ENCODE measurements at regions of chr10 and their contacts with region 1.

Region 1: DNA sequence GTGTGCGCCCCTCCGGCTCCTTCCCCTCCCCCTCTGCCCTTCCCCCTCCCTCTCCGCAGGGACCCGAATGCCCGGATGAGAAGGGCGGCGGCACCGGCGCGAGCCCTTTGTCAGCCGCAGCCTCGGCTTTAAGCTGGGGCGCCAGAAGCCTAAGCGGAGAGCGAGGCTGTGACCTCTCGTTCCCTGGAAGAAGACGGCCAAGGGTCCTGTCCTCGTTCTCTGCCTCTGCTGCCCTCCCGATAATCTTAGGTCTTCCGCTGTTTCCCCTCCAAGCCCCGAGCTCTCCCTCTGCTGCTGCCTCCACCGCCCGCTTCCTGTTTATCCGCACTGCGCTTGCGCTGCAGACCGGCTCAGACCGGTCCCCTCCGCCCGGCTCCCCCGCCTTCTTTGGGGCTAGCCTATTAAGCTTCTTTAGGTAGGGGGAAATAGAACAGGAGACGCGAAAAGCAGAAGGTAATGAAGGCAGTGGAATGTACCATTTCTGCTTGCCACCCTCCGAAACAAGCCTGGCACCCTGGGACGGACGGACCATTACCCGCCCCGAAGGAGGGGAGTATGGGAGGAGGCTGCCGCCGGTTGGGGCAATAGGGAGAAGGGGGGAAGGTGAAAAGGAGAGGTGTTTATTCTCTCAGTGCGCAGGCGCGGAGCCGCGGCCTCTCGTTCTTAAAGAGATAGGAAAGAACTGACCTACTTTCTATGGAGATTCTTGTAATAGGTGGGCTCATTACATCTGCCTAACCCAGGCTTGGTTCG is at the start of gene OGA:
- DNase-seq: peak; percentile 92 to 100 (median 98)
- ATAC-seq: peak; percentile 87
- H3K4me3 ChIP-seq: peak within 1 kb of the TSS; percentile 97
- H3K4me3 Mint-ChIP-seq: peak within 1 kb of the TSS; percentile 99
- H3K27ac ChIP-seq: peak within 1 kb of the TSS; percentile 82 to 87
- H3K27ac Mint-ChIP-seq: peak within 1 kb of the TSS; percentile 96
- H3K4me1 ChIP-seq: peaks cover 29% of the 10 kb centered on the region
- H3K4me1 Mint-ChIP-seq: peaks cover 48% of the 10 kb centered on the region
- H3K27me3 ChIP-seq: no peaks in the 10 kb centered on the region
- H3K27me3 Mint-ChIP-seq: no peaks in the 10 kb centered on the region
- CTCF ChIP-seq: no peak
- total RNA-seq, gene OGA: 395 to 416 TPM

Region 2: GRCh38 chr10:101429423-101429822 is 388.9 kb before region 1 on chr10:
- CTCF ChIA-PET with region 1: no interaction called
- POLR2A ChIA-PET with region 1: no interaction called
- intact Hi-C with region 1: no loop called
- DNase-seq: no peak
- ATAC-seq: no peak
- H3K4me3 ChIP-seq: no peak overlapping the region
- H3K4me3 Mint-ChIP-seq: no peak overlapping the region
- H3K27ac ChIP-seq: no peak overlapping the region
- H3K27ac Mint-ChIP-seq: no peak overlapping the region
- H3K4me1 ChIP-seq: no peaks in the 10 kb centered on the region
- H3K4me1 Mint-ChIP-seq: peaks cover 30% of the 10 kb centered on the region
- H3K27me3 ChIP-seq: no peaks in the 10 kb centered on the region
- H3K27me3 Mint-ChIP-seq: no peaks in the 10 kb centered on the region
- CTCF ChIP-seq: no peak

Region 3: DNA sequence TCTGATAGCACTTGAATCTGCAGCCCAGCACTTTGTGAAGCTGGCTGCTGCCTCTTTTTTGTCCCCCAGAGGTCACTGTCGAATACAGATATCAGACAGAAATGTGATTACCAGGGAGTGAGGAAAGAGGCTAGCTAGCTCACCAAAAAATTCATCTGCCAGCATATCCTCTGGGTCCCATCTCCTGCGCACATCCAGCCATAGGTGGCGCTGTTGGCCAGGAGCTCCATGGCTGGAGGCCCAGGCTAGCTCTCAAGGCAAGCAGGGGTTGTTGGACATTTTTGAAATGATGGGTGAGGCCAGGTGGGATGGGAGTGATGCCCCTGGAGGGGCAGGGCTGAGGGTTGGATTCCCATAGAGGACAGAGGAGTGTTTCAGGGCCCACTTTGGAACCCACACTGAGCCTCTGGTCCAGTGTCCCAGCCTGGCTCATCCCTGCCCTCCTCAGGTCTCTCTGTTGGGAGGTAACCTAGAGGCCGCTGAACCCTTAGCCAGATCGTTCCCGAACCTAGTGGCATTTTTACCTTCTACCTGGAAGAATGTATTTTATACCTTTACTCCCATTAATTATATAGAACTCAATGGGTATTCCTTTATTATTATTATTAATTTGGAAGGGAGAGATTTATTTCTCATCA is 215.4 kb before region 1 on chr10:
- CTCF ChIA-PET with region 1: no interaction called
- POLR2A ChIA-PET with region 1: no interaction called
- intact Hi-C with region 1: no loop called
- DNase-seq: peak; percentile 12 to 72 (median 48)
- ATAC-seq: peak; percentile 84
- H3K4me3 ChIP-seq: no peak overlapping the region
- H3K4me3 Mint-ChIP-seq: no peak overlapping the region
- H3K27ac ChIP-seq: no peak overlapping the region
- H3K27ac Mint-ChIP-seq: no peak overlapping the region
- H3K4me1 ChIP-seq: no peaks in the 10 kb centered on the region
- H3K4me1 Mint-ChIP-seq: no peaks in the 10 kb centered on the region
- H3K27me3 ChIP-seq: no peaks in the 10 kb centered on the region
- H3K27me3 Mint-ChIP-seq: no peaks in the 10 kb centered on the region
- CTCF ChIP-seq: peak; percentile 66

Region 4: DNA sequence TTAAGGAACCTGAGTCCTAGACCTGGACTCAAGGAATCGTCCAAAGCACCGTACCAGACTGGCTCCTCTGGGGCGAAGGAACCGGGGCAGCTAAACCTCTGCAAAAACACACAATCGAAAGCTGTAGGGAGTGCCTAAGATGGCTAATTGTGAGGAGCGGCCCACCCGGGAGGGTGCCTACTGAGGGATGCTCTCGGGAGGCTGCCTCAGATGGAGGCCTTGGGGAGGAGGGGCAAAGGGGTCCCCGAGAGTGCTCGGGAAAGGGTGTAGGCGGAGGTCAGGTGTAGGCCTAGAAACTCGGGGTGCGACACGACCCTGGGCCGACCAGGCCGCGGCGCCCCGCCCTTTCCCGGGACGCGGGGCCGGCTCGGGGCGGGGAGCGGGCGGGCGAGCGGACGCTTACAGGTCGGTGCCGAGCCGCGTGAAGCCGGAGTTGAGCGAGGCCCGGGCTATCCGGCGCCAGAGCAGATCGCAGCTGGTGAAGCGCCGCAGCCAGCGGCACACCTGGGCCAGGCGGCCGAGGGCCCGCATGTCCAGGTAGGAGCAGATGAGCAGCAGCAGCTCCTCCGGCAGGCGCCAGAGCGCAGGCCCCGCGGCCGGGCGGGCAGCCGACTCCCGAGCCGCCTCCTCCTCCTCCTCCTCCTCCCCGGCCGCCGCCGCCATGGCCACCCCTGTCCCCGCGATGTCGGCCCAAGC is 124.2 kb before region 1 on chr10:
- CTCF ChIA-PET with region 1: no interaction called
- POLR2A ChIA-PET with region 1: interaction called, 4 read pairs
- intact Hi-C with region 1: loop called in 1 of 2 experiments (anchors 10 kb)
- DNase-seq: peak; percentile 46 to 83 (median 63)
- ATAC-seq: peak; percentile 58
- H3K4me3 ChIP-seq: peak overlapping the region; percentile 88
- H3K4me3 Mint-ChIP-seq: peak overlapping the region; percentile 99
- H3K27ac ChIP-seq: peak overlapping the region; percentile 96 to 97
- H3K27ac Mint-ChIP-seq: peak overlapping the region; percentile 98
- H3K4me1 ChIP-seq: peaks cover 23% of the 10 kb centered on the region
- H3K4me1 Mint-ChIP-seq: peaks cover 57% of the 10 kb centered on the region
- H3K27me3 ChIP-seq: no peaks in the 10 kb centered on the region
- H3K27me3 Mint-ChIP-seq: no peaks in the 10 kb centered on the region
- CTCF ChIP-seq: no peak

Region 5: DNA sequence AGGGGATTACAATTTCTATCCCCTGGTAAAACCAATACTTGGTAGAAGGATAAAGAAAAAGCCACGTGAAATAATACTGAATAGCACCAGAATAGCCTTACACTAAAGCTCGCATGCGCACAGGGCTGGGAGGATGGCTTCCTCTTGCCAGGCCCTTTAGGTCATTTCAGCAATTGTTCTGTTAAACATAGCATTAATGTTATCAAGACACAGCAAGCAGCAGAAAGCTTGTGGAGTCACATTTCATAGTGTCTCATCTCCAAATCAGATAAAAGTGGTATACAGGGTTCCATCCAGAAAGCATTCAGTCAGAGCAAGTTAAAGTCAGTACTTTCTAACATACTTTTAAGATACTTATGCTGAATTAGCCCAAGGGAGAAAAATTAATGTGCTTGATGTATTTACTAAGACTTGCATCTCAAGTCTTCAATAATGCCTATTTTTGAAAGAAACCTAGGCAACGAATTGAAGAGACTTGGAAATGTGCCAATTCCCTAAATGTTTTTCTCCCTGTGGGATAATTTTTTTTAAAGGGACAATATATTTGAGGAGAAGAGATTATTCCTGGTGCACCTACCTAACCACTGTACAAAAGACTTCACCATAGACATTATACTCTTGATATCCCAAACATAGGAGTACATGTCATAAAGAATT is 20.8 kb before region 1 on chr10:
- CTCF ChIA-PET with region 1: interaction called, 3 read pairs
- POLR2A ChIA-PET with region 1: interaction called, 11 read pairs
- intact Hi-C with region 1: no loop called
- DNase-seq: no peak
- ATAC-seq: no peak
- H3K4me3 ChIP-seq: no peak overlapping the region
- H3K4me3 Mint-ChIP-seq: no peak overlapping the region
- H3K27ac ChIP-seq: no peak overlapping the region
- H3K27ac Mint-ChIP-seq: peak overlapping the region; percentile 10
- H3K4me1 ChIP-seq: no peaks in the 10 kb centered on the region
- H3K4me1 Mint-ChIP-seq: peaks cover 52% of the 10 kb centered on the region
- H3K27me3 ChIP-seq: no peaks in the 10 kb centered on the region
- H3K27me3 Mint-ChIP-seq: no peaks in the 10 kb centered on the region
- CTCF ChIP-seq: no peak

Region 6: DNA sequence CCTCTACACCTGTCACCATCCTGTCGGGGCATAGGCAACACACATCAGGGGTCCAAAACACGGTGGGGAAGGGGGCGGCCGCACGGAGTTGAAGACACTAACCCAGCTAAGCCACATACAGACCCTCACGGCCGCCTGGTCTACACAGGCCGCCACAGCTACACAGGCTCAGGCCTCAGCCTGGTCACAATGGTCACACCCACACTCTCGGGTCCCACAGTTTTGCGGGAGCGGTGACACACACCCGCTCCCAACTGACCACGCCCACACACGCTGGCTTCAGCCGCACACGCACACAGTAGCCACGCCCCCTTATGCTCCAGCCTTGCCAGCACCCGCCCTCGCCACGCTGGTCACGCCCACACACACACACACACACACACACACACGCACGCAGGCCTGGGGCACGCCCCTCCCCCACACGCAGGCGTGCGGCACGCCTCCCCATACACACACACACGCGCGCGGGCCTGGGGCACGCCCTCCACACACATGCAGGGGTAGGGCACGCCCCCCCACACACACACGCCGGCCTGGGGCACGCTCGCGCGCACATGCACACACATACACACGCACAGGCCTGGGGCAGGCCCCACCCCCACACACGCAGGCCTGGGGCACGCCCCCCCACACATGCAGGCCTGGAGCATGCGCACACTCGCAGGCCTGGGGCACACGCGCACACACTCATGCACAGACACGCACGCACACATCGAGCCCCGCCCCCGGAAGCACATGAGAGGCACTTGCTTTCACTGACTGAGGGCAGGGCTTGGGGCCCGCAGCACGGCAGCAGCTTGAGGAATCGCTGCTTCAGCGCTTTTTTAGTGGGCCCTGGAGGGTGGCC is 12.2 kb after region 1 on chr10:
- CTCF ChIA-PET with region 1: interaction called, 21 read pairs
- POLR2A ChIA-PET with region 1: interaction called, 223 read pairs
- intact Hi-C with region 1: loop called (anchors 1 kb)
- DNase-seq: peak; percentile 91 to 99 (median 94)
- ATAC-seq: peak; percentile 79
- H3K4me3 ChIP-seq: peak overlapping the region; percentile 63
- H3K4me3 Mint-ChIP-seq: peak overlapping the region; percentile 94
- H3K27ac ChIP-seq: peak overlapping the region; percentile 76 to 85
- H3K27ac Mint-ChIP-seq: peak overlapping the region; percentile 99
- H3K4me1 ChIP-seq: peaks cover 69% of the 10 kb centered on the region
- H3K4me1 Mint-ChIP-seq: peaks cover 55% of the 10 kb centered on the region
- H3K27me3 ChIP-seq: no peaks in the 10 kb centered on the region
- H3K27me3 Mint-ChIP-seq: peaks cover 5% of the 10 kb centered on the region
- CTCF ChIP-seq: no peak

Region 7: DNA sequence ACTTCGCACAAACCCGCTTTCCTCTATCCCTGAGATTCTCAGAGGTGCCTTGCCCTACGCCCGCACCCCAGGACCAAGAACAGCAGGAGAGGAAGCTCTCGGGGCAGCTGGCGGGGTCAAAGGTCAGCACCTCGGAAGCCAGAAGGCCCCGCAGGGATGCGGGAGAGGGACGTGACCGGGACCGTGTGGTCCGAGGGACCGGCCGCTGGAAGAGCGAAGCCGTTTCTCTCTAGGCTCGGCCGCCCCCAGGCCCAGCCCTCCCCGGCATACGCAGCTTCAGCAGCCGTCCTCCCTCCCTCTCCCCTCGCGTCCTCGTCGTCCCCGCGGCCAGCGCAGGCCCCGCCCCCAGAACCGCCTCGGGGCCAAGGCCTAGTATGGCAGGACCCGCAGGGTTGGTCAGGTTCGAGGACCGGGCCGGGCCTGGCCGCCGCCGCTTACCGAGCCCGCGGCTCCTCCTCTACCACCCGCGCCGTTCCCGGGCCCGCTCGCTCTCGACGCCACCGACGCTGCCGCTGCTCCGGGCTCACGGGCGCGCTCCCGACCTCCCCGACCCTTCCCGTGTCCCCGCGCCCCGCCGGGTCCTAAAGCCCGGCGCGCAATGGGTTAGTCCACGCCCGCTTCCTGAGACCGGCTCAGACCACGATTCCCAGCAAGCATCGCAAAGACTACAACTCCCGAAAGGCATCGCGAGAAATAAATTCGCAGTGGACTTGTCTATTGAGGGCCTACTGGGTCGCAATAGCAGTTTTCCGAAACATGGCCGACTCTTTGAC is 237.5 kb after region 1 on chr10 and contains the start of gene ARMH3:
- CTCF ChIA-PET with region 1: no interaction called
- POLR2A ChIA-PET with region 1: interaction called, 6 read pairs
- intact Hi-C with region 1: loop called in 1 of 2 experiments (anchors 5 kb)
- DNase-seq: peak; percentile 75 to 96 (median 84)
- ATAC-seq: peak; percentile 93
- H3K4me3 ChIP-seq: peak within 1 kb of the TSS; percentile 84
- H3K4me3 Mint-ChIP-seq: peak within 1 kb of the TSS; percentile 96
- H3K27ac ChIP-seq: peak within 1 kb of the TSS; percentile 70 to 83
- H3K27ac Mint-ChIP-seq: peak within 1 kb of the TSS; percentile 87
- H3K4me1 ChIP-seq: peaks cover 48% of the 10 kb centered on the region
- H3K4me1 Mint-ChIP-seq: peaks cover 45% of the 10 kb centered on the region
- H3K27me3 ChIP-seq: no peaks in the 10 kb centered on the region
- H3K27me3 Mint-ChIP-seq: no peaks in the 10 kb centered on the region
- CTCF ChIP-seq: no peak
- total RNA-seq, gene ARMH3: 17.7 to 18.9 TPM

Region 8: DNA sequence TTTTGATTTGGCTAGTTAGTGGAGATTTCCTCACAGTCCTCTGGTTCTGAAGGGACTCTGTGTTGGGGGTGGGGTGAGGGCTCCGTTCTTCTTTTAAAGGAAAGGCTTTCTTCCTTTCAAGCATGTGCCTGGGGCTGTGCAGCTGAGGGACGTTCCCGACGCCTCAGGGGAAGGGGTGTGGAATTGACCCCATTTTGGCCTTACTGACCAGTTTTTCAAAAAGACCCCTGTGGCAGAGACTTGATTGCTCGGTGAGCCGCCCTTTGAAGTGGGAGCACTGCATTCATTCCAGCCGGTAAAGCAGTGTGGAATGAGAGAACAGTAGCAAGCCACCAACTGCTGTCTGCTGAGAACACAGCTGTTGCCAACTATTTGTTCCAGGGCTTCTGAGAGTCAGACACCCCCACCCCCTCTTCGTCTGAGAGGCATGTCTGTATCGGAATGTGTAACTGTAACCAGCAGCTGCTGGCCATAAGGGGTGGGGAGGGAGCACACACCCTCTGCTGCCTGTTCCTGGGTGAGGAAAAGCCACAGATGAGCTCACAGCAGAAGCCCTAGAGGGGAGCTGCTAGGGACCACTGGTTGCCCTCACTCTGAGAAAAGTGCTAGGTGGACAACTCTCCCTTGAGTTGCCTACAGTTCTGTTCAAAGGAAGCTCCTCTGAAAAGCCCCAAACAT is 958.6 kb after region 1 on chr10:
- CTCF ChIA-PET with region 1: no interaction called
- POLR2A ChIA-PET with region 1: no interaction called
- intact Hi-C with region 1: no loop called
- DNase-seq: peak in 6 of 14 experiments; percentile 7 to 64 (median 24)
- ATAC-seq: peak; percentile 52
- H3K4me3 ChIP-seq: no peak overlapping the region
- H3K4me3 Mint-ChIP-seq: peak overlapping the region; percentile 11
- H3K27ac ChIP-seq: no peak overlapping the region
- H3K27ac Mint-ChIP-seq: peak overlapping the region; percentile 78
- H3K4me1 ChIP-seq: peaks cover 47% of the 10 kb centered on the region
- H3K4me1 Mint-ChIP-seq: peaks cover 71% of the 10 kb centered on the region
- H3K27me3 ChIP-seq: no peaks in the 10 kb centered on the region
- H3K27me3 Mint-ChIP-seq: no peaks in the 10 kb centered on the region
- CTCF ChIP-seq: no peak

Measured in CD4-positive, alpha-beta T cell (primary cell).